Activated CD4-positive, alpha-beta memory T cell treated with anti-CD3 and anti-CD28 coated beads, Interleukin-2, amount 10 ng/mL, durations not matched to agents 7 days and 5 days (primary cell): ENCODE measurements at regions of chr5 and their contacts with region 1.

Region 1: GRCh38 chr5:156934450-156935211 is 28.4 kb downstream of the TIMD4 start:
- DNase-seq: peak; percentile 73
- H3K4me3 Mint-ChIP-seq: peak overlapping the region; percentile 19
- H3K27ac Mint-ChIP-seq: peak overlapping the region; percentile 60
- H3K4me1 Mint-ChIP-seq: peaks cover 37% of the 10 kb centered on the region
- H3K27me3 Mint-ChIP-seq: peaks cover 7% of the 10 kb centered on the region

Region 2: GRCh38 chr5:156237361-156237760 is 697.3 kb before region 1 on chr5:
- CTCF ChIA-PET with region 1: no interaction called
- POLR2A ChIA-PET with region 1: no interaction called
- DNase-seq: no peak
- H3K4me3 Mint-ChIP-seq: no peak overlapping the region
- H3K27ac Mint-ChIP-seq: no peak overlapping the region
- H3K4me1 Mint-ChIP-seq: no peaks in the 10 kb centered on the region
- H3K27me3 Mint-ChIP-seq: no peaks in the 10 kb centered on the region

Region 3: GRCh38 chr5:156913719-156914370 is 20.8 kb before region 1 on chr5:
- CTCF ChIA-PET with region 1: interaction called, 17 read pairs
- POLR2A ChIA-PET with region 1: interaction called, 8 read pairs
- DNase-seq: peak; percentile 41
- H3K4me3 Mint-ChIP-seq: peak overlapping the region; percentile 58
- H3K27ac Mint-ChIP-seq: peak overlapping the region; percentile 97
- H3K4me1 Mint-ChIP-seq: peaks cover 41% of the 10 kb centered on the region
- H3K27me3 Mint-ChIP-seq: no peaks in the 10 kb centered on the region